ENCODE measurements at regions of chr13 and their contacts with region 1.

Region 1: DNA sequence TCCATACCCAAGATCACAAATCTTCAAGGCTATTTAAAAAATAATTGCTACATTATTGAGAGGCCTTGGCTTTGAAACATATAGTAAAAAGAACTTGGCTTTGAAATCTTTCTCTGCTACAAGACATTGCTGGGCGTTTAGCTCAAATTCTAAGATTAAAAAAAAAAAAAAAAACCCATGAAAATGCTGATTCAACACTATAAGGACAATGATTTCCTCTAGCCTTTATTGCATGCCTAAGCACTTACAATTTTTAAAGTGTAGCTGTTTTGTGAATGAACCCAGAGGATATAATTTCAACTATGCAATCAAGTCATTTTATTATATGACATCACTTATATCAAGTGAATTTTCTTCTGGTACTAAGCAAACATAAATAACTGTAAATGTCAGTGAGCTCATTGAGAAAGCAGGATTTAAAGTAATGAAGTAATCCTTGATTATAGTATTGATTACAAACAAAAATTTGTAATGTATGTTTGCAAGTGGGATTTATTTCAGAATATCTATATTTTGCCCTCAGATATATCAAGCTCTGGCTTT is 340.0 kb upstream of the GPC6 start:
- DNase-seq: no peak
- H3K4me3 ChIP-seq: no peak overlapping the region
- CTCF ChIP-seq: no peak
- POLR2A ChIP-seq: no peak

Region 2: GRCh38 chr13:92510416-92510815 is 376.2 kb before region 1 on chr13:
- intact Hi-C with region 1: no loop called
- DNase-seq: no peak
- H3K4me3 ChIP-seq: no peak overlapping the region
- CTCF ChIP-seq: no peak
- POLR2A ChIP-seq: no peak

Region 3: GRCh38 chr13:92843549-92843948 is 43.1 kb before region 1 on chr13:
- intact Hi-C with region 1: loop called (anchors 2 kb)
- DNase-seq: no peak
- H3K4me3 ChIP-seq: no peak overlapping the region
- CTCF ChIP-seq: no peak
- POLR2A ChIP-seq: no peak